Cardiac septum (tissue), 1 donor: ENCODE measurements at regions of chr2 and their contacts with region 1.

Region 1: DNA sequence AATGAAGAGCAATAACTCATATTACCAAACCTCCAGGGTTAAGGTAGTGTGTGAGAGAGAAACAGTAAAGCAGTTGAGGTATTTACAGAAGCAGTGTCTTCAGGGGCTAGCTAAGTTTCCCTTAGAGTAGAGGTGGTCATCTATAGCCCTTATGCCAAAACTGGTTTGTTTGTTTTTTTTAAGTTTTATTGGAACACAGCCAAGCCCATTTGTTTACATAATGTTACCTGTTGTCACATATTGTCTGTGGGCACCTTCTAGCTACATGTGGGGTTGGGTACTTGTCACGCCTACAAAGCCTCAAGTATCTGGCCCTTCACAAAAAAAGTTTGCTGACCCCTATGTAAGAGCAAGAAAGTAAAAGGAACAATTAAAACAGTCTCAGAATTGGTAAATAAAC is 39.4 kb downstream of the ACTR2 start:
- DNase-seq: no peak

Region 2: DNA sequence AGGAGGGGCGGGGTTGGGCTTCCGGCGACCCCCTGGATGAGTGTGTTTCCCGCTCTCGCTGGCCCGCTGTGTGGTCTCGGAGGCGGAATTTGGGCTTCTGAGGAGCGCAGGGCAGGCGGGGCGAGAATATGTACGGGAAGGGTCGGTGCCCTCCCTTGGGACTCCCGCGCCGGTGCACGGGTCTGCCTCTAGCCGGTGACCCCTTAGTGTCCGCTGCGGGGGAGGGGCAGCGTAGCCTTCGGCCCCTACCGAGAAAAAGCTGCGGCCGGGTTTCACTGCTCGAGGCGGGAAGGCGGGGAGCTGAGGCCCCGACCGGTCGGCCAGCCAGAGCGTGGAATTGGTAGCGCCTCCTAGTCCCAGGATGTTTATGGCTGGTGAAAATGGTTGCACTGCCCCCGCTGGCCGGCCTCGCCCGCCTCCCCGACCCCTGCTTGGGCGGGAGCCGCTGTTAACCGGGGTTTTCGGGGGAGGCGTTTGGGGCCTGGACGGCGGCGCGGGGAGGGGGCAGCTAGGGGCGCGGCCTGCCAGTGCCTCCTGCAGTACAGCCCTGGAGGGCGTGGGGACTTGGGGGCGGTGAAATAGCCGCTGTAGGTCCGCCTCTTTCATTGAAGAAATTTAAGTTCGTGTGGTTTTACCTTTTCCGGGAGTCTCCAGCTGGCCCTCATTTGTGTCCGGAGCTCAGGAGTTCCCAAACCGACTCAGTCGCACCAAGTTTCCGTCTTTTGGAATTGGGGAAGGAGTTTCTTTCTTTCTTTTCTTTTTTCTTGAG is 1425.6 kb before region 1 on chr2 and contains the start of gene UGP2:
- intact Hi-C with region 1: no loop called
- DNase-seq: peak; percentile 94
- total RNA-seq, gene UGP2: 327 TPM

Region 3: GRCh38 chr2:65553504-65554074 is 286.6 kb after region 1 on chr2:
- intact Hi-C with region 1: loop called (anchors 2 kb)
- DNase-seq: no peak